GM12878 (cell line): ENCODE measurements at regions of chr20 and their contacts with region 1.

Region 1: GRCh38 chr20:6295127-6295866 is 172.5 kb upstream of the FERMT1 start:
- DNase-seq: no peak
- ATAC-seq: no peak
- H3K4me3 ChIP-seq: no peak overlapping the region
- H3K27ac ChIP-seq: no peak overlapping the region
- H3K4me1 ChIP-seq: no peaks in the 10 kb centered on the region
- H3K27me3 ChIP-seq: no peaks in the 10 kb centered on the region
- CTCF ChIP-seq: no peak
- EP300 ChIP-seq: no peak
- POLR2A ChIP-seq: no peak
- RAD21 ChIP-seq: no peak

Region 2: GRCh38 chr20:6341491-6341890 is 46.2 kb after region 1 on chr20:
- CTCF ChIA-PET with region 1: no interaction called
- POLR2A ChIA-PET with region 1: no interaction called
- RAD21 ChIA-PET with region 1: no interaction called
- SMC1A ChIA-PET with region 1: no interaction called
- in situ Hi-C with region 1: loop called (anchors 5 kb)
- intact Hi-C with region 1: no loop called
- DNase-seq: no peak
- ATAC-seq: no peak
- H3K4me3 ChIP-seq: no peak overlapping the region
- H3K27ac ChIP-seq: no peak overlapping the region
- H3K4me1 ChIP-seq: no peaks in the 10 kb centered on the region
- H3K27me3 ChIP-seq: 0 out of 4 replicates have a peak, but pooled peaks cover 0 to 1% of the 10 kb centered on the region in 2 experiments
- CTCF ChIP-seq: no peak
- EP300 ChIP-seq: no peak
- POLR2A ChIP-seq: no peak
- RAD21 ChIP-seq: no peak

Region 3: GRCh38 chr20:6395695-6396094 is 100.4 kb after region 1 on chr20:
- CTCF ChIA-PET with region 1: no interaction called
- POLR2A ChIA-PET with region 1: no interaction called
- RAD21 ChIA-PET with region 1: no interaction called
- SMC1A ChIA-PET with region 1: no interaction called
- in situ Hi-C with region 1: no loop called
- intact Hi-C with region 1: loop called (anchors 10 kb)
- DNase-seq: no peak
- ATAC-seq: no peak
- H3K4me3 ChIP-seq: no peak overlapping the region
- H3K27ac ChIP-seq: no peak overlapping the region
- H3K4me1 ChIP-seq: no peaks in the 10 kb centered on the region
- H3K27me3 ChIP-seq: no peaks in the 10 kb centered on the region
- CTCF ChIP-seq: no peak
- EP300 ChIP-seq: no peak
- POLR2A ChIP-seq: no peak
- RAD21 ChIP-seq: no peak